MCF 10A (cell line): ENCODE measurements at regions of chr19 and their contacts with region 1.

Region 1: DNA sequence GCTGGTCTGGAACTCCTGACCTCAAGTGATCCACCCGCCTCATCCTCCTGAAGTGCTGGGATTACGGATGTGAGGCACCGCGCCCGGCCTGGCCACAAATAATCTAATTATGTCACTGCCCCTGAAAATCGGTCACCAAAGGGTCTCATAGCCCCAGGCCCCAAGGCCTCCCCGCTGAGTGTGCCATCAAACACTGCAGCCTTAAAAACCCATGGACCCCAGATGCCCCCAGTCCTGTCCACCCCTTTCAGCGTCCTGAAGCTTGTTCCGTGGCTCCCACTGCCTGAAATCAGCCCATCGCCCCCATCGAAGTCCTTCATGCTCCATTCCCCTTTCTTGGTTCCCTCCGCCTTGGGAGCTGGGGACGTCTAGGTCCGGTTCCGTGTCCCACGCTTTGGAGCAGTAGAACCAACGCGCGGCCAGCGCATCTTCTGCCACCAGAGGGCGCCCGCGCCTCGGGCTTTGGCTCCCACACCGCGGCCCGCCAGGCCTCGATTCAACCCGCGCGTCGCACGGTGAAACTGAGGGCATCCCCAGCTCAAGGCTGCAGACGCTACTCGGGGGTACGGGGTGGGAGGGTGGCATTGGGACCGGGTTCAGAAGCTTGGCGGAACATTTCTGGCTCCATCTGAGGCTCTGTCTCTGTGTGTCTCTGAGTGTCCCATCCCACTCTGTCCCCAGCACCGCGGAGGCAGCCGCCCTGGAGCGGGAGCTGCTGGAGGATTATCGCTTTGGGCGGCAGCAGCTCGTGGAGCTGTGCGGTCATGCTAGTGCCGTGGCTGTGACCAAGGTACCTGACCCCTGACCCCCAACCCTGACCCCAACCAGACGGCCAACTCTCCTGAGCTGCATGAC is 3.5 kb downstream of the YJEFN3 start:
- DNase-seq: peak; percentile 80
- H3K4me3 Mint-ChIP-seq: no peak overlapping the region
- H3K27ac Mint-ChIP-seq: no peak overlapping the region
- H3K4me1 Mint-ChIP-seq: peaks cover 11% of the 10 kb centered on the region
- H3K27me3 Mint-ChIP-seq: no peaks in the 10 kb centered on the region
- CTCF ChIP-seq: peak; percentile 89

Region 2: DNA sequence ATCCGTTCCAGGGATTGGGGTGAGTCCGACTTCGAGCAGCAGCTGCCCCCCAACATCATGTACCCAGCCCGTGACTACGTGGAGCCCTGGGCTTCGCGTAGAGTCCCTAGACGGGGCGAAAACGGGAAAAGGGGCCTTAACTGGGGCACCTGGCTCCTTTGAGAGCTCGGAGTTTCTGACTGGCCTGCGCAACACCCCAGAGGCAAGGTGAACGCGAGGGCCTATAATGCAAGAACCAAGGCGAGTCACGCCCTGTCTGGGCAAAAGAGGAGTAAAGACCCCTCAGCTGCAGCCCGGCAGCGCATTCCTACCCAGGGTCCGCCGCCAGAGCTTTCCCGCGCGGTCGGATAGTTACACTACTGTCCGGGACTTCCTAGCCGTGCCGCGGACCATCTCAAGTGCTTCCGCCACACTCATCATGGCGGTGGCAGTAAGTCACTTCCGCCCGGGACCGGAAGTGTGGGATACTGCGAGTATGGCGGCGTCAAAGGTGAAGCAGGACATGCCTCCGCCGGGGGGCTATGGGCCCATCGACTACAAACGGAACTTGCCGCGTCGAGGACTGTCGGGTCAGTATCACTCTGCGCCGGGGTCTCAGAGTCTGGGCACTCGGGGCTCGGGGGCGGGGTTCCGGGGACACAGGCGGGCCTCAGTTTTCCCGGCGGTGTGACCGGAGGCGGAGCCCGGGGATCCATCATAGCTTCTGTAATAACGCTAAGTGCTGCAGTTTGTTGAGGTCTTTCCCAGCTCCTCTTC is 16.2 kb before region 1 on chr19 and contains the start of gene NDUFA13:
- CTCF ChIA-PET with region 1: interaction called, 13 read pairs
- POLR2A ChIA-PET with region 1: interaction called, 12 read pairs
- intact Hi-C with region 1: no loop called
- DNase-seq: peak; percentile 95
- H3K4me3 Mint-ChIP-seq: peak within 1 kb of the TSS; percentile 93
- H3K27ac Mint-ChIP-seq: peak within 1 kb of the TSS; percentile 96
- H3K4me1 Mint-ChIP-seq: peaks cover 12% of the 10 kb centered on the region
- H3K27me3 Mint-ChIP-seq: no peaks in the 10 kb centered on the region
- CTCF ChIP-seq: no peak
- total RNA-seq, gene NDUFA13: 354 and 393 TPM in 2 replicates

Region 3: DNA sequence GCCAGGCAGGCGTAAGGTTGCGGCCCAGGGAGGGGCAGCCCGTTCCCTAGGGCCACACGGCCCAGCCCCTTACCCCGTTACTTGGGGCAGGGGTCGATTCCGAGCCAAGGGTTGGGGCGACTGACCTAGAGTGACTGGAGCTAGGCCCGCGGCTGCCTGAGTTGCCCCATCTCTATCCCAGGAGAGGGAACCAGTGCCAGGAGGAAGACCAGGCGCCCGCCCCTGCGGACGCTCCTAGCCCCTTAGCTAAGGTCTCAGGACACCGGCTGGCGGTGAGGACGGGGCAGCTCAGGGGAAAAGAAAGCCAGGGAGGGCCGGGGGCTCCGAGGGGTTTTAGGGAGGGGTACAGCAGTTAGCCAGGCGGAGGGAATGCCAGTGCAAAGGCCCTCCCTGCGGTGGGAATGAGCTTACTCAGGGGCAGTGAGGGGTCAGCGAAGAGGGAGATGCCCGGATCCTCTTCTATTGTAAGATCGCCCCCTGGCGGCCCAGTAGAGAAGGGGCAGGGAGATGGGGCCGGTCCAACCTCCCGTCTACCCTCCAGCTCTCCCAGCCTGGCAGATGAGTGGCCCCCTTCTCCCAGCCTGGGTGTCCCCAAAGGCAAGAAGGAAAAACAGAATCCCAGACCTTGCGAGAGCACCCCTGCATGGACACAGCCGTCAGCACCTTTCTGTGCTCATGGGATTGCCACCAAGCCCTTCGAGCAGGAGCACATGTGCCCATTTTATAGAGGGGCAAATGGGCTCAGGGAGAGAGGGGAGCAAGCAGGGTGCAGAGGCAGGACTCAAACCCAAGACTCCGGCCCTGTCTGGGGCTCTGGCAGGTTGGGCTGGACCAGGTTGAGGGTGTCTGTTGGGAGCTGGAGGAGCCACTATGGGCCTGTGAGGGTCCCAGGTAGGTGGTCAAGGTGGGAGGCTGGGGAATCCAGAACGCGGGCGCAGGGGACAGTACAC is 22.2 kb after region 1 on chr19:
- CTCF ChIA-PET with region 1: interaction called, 10 read pairs
- POLR2A ChIA-PET with region 1: no interaction called
- intact Hi-C with region 1: no loop called
- DNase-seq: peak; percentile 66
- H3K4me3 Mint-ChIP-seq: no peak overlapping the region
- H3K27ac Mint-ChIP-seq: no peak overlapping the region
- H3K4me1 Mint-ChIP-seq: no peaks in the 10 kb centered on the region
- H3K27me3 Mint-ChIP-seq: no peaks in the 10 kb centered on the region
- CTCF ChIP-seq: peak; percentile 70

Region 4: GRCh38 chr19:19581391-19581790 is 49.2 kb after region 1 on chr19:
- CTCF ChIA-PET with region 1: no interaction called
- POLR2A ChIA-PET with region 1: no interaction called
- intact Hi-C with region 1: no loop called
- DNase-seq: no peak
- H3K4me3 Mint-ChIP-seq: no peak overlapping the region
- H3K27ac Mint-ChIP-seq: no peak overlapping the region
- H3K4me1 Mint-ChIP-seq: no peaks in the 10 kb centered on the region
- H3K27me3 Mint-ChIP-seq: no peaks in the 10 kb centered on the region
- CTCF ChIP-seq: no peak

Region 5: GRCh38 chr19:19627621-19628500 is 95.7 kb after region 1 on chr19 and contains the start of gene LPAR2:
- CTCF ChIA-PET with region 1: interaction called, 13 read pairs
- POLR2A ChIA-PET with region 1: interaction called, 4 read pairs
- intact Hi-C with region 1: no loop called
- DNase-seq: peak; percentile 52
- H3K4me3 Mint-ChIP-seq: peak within 1 kb of the TSS; percentile 75
- H3K27ac Mint-ChIP-seq: peak within 1 kb of the TSS; percentile 77
- H3K4me1 Mint-ChIP-seq: peaks cover 13% of the 10 kb centered on the region
- H3K27me3 Mint-ChIP-seq: no peaks in the 10 kb centered on the region
- CTCF ChIP-seq: no peak
- total RNA-seq, gene LPAR2: 15.5 and 17.4 TPM in 2 replicates

Region 6: DNA sequence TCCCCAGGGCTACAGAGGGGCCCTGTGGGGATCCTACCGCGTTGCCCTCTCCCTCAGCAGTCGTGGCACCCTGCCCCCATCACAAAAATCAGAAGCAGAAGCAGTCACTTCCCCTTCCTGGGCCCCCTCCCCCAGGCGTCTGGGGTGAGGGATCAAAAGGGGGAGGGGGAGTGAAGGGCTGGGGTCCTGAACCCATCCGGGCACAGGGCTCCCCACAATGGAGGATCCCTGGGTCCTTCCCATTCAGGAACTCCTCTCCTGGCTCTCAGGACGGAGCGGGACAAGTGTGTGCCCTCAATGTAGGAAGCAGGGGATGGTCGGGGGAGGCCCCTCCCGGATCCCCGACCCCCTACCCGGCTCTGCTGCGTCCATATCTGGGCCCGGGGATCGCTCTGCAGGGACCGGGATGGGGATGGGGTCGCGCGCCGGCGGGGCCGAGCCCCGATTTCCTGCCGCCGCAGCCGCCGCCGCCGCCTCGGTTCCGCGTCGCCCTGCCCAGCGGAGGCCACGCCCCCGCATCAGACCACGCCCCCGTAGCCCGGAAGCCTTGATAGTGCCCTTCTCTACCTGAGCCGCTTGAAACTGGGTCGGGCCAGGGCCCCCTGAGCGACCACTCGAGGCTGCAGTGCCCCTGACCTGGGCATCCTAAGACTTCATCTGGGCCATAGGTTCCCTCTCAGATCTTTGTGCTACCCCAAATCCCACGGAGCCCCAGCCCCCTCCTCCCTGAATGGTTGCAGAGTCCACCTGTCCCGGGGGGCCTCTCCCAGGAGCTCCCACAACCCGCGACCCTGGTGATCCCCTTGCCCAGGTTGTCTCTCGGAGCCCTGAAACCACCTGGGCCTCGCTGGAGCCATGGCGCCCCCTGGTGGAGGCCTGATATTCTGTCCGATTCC is 111.2 kb after region 1 on chr19 and contains the start of gene GMIP:
- CTCF ChIA-PET with region 1: interaction called, 107 read pairs
- POLR2A ChIA-PET with region 1: interaction called, 8 read pairs
- intact Hi-C with region 1: loop called (anchors 1 kb)
- DNase-seq: peak; percentile 77
- H3K4me3 Mint-ChIP-seq: peak within 1 kb of the TSS; percentile 89
- H3K27ac Mint-ChIP-seq: peak within 1 kb of the TSS; percentile 78
- H3K4me1 Mint-ChIP-seq: peaks cover 12% of the 10 kb centered on the region
- H3K27me3 Mint-ChIP-seq: no peaks in the 10 kb centered on the region
- CTCF ChIP-seq: peak; percentile 93
- total RNA-seq, gene GMIP: 9.1 and 10.1 TPM in 2 replicates

Region 7: DNA sequence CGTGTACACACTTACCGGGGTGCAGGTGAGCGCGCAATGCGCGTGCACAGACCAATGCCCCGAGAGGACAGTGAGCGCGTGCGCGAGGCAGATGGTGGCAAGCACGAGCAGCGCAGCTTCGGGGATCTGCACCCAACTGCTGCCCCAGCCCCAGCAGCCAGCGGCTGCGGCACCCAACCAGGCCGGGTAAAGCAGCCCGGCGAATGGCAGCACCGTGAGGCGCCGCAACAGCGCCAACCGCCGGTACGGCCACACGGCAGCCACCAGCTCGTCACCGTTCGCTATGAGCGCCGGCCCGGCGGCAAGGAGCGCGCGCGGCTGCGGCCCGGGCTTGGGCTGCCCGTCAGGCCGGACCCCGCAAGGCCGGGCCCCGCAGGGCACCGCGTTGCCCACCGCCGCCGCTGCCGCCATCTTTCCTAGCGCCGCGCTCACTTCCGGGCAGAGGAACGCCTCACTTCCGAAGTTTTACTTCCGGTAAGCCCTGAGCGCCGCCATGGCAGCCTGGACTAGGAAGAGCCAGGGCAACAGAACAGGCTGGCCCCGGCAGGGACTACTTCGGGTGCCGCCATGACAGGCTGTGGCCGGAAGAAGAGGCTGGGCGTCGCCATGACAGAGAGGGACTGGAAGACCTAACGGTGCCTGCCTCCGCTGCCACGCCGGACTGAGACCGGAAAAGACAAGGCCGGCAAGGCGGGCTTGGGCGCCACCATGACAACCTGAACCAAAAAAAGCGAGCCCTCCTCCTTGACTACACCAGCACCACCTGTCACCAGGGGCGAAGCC is 131.3 kb after region 1 on chr19 and contains the start of gene ATP13A1:
- CTCF ChIA-PET with region 1: interaction called, 13 read pairs
- POLR2A ChIA-PET with region 1: interaction called, 5 read pairs
- intact Hi-C with region 1: no loop called
- DNase-seq: peak; percentile 98
- H3K4me3 Mint-ChIP-seq: peak within 1 kb of the TSS; percentile 79
- H3K27ac Mint-ChIP-seq: peak within 1 kb of the TSS; percentile 96
- H3K4me1 Mint-ChIP-seq: peaks cover 16% of the 10 kb centered on the region
- H3K27me3 Mint-ChIP-seq: no peaks in the 10 kb centered on the region
- CTCF ChIP-seq: no peak
- total RNA-seq, gene ATP13A1: 63.9 and 67.2 TPM in 2 replicates